ENCODE measurements at regions of chr16 and their contacts with region 1.

Region 1: GRCh38 chr16:50301626-50302471 is 35.5 kb downstream of the ADCY7 start:
- DNase-seq: peak; percentile 37
- H3K4me3 ChIP-seq: no peak overlapping the region
- CTCF ChIP-seq: no peak

Region 2: GRCh38 chr16:50259334-50260205 is 42.3 kb before region 1 on chr16:
- in situ Hi-C with region 1: loop called (anchors 5 kb)
- DNase-seq: no peak
- H3K4me3 ChIP-seq: no peak overlapping the region
- CTCF ChIP-seq: no peak

Measured in astrocyte of the cerebellum (primary cell).